Dorsolateral prefrontal cortex (tissue), 120 donors: ENCODE measurements at regions of chr22 and their contacts with region 1.

Region 1: DNA sequence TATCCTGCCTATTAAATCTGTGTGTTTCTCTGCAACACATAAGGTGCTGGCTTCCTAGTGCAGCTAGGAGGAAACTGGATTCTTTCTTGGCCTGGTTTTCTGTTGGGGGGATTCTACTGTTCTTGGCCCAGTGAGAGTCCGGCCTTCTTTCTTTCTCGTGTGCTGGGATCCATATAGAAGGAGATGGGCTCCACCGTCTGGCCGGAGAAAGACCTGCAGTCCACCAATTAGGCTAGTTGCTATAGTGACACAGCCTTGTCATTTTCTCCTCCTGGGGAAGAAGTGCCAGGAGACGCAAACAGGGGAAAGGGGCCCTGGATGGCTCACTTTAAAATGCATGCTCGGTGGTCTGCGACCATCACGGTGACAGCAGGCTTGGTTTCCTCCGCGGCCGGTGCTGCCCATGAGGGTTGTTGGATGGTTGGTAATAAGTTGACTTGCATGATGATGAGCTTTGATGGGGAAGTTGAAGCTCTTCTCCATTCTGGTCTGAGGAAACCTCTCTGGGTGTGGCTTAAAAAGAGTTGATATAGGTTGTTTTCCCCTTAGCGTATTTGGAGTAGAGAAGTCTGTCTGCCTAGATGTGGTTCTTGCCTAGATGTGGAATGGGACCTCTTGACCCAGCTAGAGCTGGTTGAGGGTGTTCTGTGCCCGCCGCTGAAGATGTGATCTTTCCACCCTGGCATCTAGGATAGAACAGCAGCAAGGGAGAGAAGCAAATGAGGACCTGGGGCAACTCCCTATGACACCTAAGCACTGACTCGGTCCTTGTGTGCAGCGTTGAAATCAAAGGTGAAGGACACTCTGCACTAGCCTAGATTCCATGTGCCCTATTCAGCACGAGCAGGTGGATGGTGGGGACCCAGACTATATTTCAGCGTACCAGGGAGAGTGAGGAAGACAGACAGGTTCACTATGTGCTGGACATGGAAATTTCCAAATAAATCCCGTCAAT is 1335.0 kb downstream of the BRD1 start:
- DNase-seq: peak; percentile 68 to 90 (median 84)
- H3K4me3 ChIP-seq: peak overlapping the region in 38 of 59 donors; percentile 5 to 82 (median 74)
- H3K27ac ChIP-seq: peak overlapping the region in 17 of 59 donors; percentile 1 to 88 (median 48)
- H3K27me3 ChIP-seq: peaks cover 0 to 16% (median 0%) of the 10 kb centered on the region in 45 donors
- CTCF ChIP-seq: peak in 55 of 56 donors; percentile 52 to 90 (median 76)

Region 2: GRCh38 chr22:46798366-46799350 is 1694.0 kb before region 1 on chr22:
- intact Hi-C with region 1: loop called in 1 of 2 experiments (anchors 5 kb)
- DNase-seq: peak; percentile 69 to 87 (median 79)
- H3K4me3 ChIP-seq: no peak overlapping the region
- H3K27ac ChIP-seq: peak overlapping the region in 36 of 59 donors; percentile 7 to 67 (median 36)
- H3K27me3 ChIP-seq: no peaks in the 10 kb centered on the region
- CTCF ChIP-seq: peak; percentile 52 to 98 (median 93)

Region 3: DNA sequence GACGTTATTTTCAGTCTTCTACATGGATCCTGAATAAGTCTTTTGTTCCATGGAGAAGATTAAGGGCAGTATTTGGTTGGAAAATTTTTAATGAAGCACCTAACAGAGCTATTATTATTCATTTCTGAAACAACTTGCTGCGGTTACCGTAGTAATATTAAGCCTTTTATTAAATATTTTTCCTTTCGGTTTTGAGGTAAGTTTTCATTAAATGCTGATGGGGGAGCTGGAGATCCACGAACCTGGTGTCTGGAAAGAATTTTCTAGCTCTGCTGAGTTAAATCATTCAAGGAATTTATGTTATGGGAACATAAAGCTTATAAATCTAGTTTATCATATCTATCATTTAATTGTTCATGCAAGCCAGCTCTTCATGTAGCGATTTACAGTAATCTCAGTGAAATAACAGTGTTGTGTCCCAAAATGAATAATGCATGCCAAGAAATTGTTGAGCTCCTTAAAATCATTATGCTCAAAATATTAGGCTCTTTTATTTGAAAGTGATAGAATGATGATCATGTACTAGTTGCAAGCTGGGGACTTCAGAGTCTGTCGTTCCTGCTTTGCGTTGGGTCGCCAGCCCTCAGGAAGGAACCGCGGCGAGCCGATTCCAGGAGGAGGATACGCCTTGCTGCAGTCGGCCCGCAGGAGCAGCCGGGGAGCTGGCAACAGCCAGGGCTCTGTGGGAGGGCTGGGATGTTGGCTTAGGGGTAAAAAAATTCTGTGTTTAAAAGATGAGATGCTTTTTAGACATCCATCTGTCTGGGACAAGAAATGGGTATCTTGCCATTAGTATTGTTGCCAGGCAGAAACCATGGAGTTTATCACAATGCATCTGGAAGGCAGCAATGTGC is 1647.1 kb before region 1 on chr22:
- intact Hi-C with region 1: loop called in 1 of 2 experiments (anchors 10 kb)
- DNase-seq: peak in 7 of 10 donors; percentile 41 to 68 (median 59)
- H3K4me3 ChIP-seq: peak overlapping the region in 57 of 59 donors; percentile 1 to 62 (median 38)
- H3K27ac ChIP-seq: peak overlapping the region in 56 of 59 donors; percentile 3 to 92 (median 70)
- H3K27me3 ChIP-seq: no peaks in the 10 kb centered on the region
- CTCF ChIP-seq: peak in 55 of 56 donors; percentile 36 to 79 (median 61)

Region 4: GRCh38 chr22:47626428-47627390 is 865.9 kb before region 1 on chr22:
- intact Hi-C with region 1: loop called in 1 of 2 experiments (anchors 10 kb)
- DNase-seq: no peak
- H3K4me3 ChIP-seq: no peak overlapping the region
- H3K27ac ChIP-seq: peak overlapping the region in 1 of 59 donors; percentile 42
- H3K27me3 ChIP-seq: peaks cover 0 to 16% (median 0%) of the 10 kb centered on the region in 45 donors
- CTCF ChIP-seq: peak in 6 of 56 donors; percentile 5 to 21 (median 14)

Region 5: DNA sequence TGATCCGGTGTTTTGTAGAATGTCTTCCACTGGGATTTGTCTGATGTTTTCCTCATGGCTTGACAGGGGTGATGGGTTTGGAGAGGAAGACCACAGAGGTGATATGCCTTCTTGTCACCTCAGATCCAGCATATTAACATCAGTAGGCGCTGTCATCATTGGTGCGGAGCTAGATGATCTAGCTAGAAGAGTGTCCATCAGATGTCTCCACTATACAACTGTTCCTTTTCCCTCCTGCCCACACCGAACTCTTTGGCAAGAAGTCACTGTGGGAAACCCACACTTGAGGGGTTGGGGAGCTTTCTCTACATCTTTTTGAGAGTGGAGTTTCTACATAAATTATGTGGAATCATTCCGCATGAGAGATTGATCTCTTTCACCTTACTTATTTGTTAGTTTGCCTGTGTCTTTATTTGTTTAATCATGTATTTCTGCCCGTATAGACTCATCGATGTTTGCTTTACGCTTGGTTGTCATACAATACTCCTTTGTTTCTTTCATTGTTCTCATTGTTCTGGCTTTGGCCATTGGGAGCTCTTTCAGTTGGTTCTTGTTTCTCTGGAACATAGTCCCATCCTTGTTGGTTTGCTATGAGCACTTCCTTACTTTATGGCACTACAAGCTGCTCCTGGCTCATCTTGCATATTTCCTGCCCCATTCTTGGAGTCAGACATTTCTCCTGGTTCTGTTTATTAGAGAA is 85.2 kb before region 1 on chr22:
- intact Hi-C with region 1: loop called in 1 of 2 experiments (anchors 1 kb)
- DNase-seq: peak in 1 of 10 donors; percentile 29
- H3K4me3 ChIP-seq: peak overlapping the region in 2 of 59 donors; percentile 2 to 21
- H3K27ac ChIP-seq: peak overlapping the region in 53 of 59 donors; percentile 14 to 93 (median 76)
- H3K27me3 ChIP-seq: peaks cover 0 to 10% (median 0%) of the 10 kb centered on the region in 45 donors
- CTCF ChIP-seq: peak in 15 of 56 donors; percentile 8 to 54 (median 28)

Region 6: GRCh38 chr22:48567213-48567975 is 74.8 kb after region 1 on chr22:
- intact Hi-C with region 1: loop called in 1 of 2 experiments (anchors 5 kb)
- DNase-seq: peak in 1 of 10 donors; percentile 66
- H3K4me3 ChIP-seq: peak overlapping the region in 22 of 59 donors; percentile 6 to 44 (median 20)
- H3K27ac ChIP-seq: peak overlapping the region in 13 of 59 donors; percentile 6 to 71 (median 39)
- H3K27me3 ChIP-seq: no peaks in the 10 kb centered on the region
- CTCF ChIP-seq: no peak